ENCODE measurements at regions of chr6 and their contacts with region 1.

Region 1: GRCh38 chr6:33271458-33272274 is at the starts of genes RPS18 and VPS52:
- DNase-seq: peak; percentile 90 to 96 (median 95)
- ATAC-seq: peak; percentile 96 to 98 (median 98)
- H3K4me3 ChIP-seq: peak within 1 kb of the TSS; percentile 68 to 92 (median 76)
- H3K27ac ChIP-seq: peak within 1 kb of the TSS; percentile 86 to 98 (median 93)
- H3K4me1 ChIP-seq: peaks cover 15 to 60% (median 49%) of the 10 kb centered on the region in 12 donors
- H3K27me3 ChIP-seq: no peaks in the 10 kb centered on the region
- CTCF ChIP-seq: peak in 1 of 12 donors; percentile 9
- POLR2A ChIP-seq: peak; percentile 18 to 94
- total RNA-seq, gene RPS18: 685 to 1,292 (median 971) TPM
- total RNA-seq, gene VPS52: 26.4 to 47.0 (median 34.2) TPM

Region 2: GRCh38 chr6:33147807-33148666 is 123.6 kb before region 1 on chr6:
- intact Hi-C with region 1: no loop called
- DNase-seq: no peak
- ATAC-seq: peak in 1 of 4 donors; percentile 54
- H3K4me3 ChIP-seq: no peak overlapping the region
- H3K27ac ChIP-seq: no peak overlapping the region
- H3K4me1 ChIP-seq: peaks cover 0 to 7% (median 0%) of the 10 kb centered on the region in 12 donors
- H3K27me3 ChIP-seq: peaks cover 0 to 15% (median 4%) of the 10 kb centered on the region in 9 donors
- CTCF ChIP-seq: peak; percentile 58 to 93 (median 72)
- POLR2A ChIP-seq: no peak

Region 3: DNA sequence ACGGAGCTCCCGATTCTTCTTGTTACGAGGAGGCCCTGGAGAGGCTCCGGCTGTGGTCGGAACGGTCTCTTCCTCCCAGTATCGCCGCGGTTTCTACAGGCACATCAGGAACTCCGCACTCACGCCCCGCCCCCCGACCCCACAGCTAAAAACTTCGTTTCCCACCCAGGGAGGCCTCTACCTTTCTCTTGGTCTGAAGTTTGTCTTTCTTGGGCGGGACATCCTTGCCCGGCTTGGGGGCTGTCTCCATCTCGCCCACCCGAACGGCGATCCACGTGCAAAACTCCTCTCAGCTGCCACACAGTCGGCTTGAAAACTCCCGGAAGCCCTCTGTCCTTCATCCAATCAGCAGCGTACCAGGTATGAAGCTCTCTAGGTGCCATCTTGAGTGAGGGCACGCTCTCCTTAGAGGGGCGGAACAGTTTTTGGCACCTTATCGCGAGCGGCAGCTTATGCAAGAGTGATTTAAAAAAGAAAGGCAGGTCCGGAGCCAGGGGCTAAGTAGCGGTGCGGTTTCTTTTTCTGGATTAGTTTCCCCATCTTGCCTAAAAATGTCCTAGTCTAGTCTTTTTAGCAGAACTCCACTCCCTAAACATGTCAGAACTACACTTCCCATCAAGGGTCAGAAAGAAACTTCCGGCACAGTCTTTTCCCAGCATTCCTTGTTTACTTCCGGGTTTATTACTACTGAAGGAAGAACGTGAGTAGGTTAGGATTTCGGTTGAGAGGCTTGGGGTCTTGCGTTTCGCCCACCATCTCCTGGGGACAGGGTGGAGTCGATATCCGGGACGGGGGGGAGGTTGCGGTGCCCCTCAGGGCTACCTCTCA is 17.5 kb after region 1 on chr6 and contains the starts of genes PFDN6 and WDR46:
- intact Hi-C with region 1: loop called in 1 of 10 experiments (anchors 2 kb)
- DNase-seq: peak; percentile 74 to 87 (median 86)
- ATAC-seq: peak; percentile 92 to 98 (median 95)
- H3K4me3 ChIP-seq: peak within 1 kb of the TSS; percentile 60 to 90 (median 73)
- H3K27ac ChIP-seq: peak within 1 kb of the TSS; percentile 49 to 89 (median 81)
- H3K4me1 ChIP-seq: peaks cover 0 to 25% (median 18%) of the 10 kb centered on the region in 12 donors
- H3K27me3 ChIP-seq: no peaks in the 10 kb centered on the region
- CTCF ChIP-seq: no peak
- POLR2A ChIP-seq: peak in 1 of 2 donors; percentile 32
- total RNA-seq, gene PFDN6: 29.2 to 62.2 (median 43.2) TPM
- total RNA-seq, gene WDR46: 12.2 to 39.5 (median 21.4) TPM

Measured in heart left ventricle (tissue), 16 donors.